ENCODE measurements at regions of chr7 and their contacts with region 1.

Region 1: GRCh38 chr7:122219253-122219865 is 75.3 kb upstream of the AASS start:
- DNase-seq: no peak
- H3K4me3 ChIP-seq: no peak overlapping the region
- H3K27ac ChIP-seq: no peak overlapping the region
- H3K4me1 ChIP-seq: no peaks in the 10 kb centered on the region
- H3K27me3 ChIP-seq: no peaks in the 10 kb centered on the region
- CTCF ChIP-seq: peak in 2 of 3 experiments; percentile 45 to 57; a peak in 2 of 4 replicates
- EP300 ChIP-seq: no peak
- POLR2A ChIP-seq: no peak
- RAD21 ChIP-seq: peak; percentile 78 to 92

Region 2: DNA sequence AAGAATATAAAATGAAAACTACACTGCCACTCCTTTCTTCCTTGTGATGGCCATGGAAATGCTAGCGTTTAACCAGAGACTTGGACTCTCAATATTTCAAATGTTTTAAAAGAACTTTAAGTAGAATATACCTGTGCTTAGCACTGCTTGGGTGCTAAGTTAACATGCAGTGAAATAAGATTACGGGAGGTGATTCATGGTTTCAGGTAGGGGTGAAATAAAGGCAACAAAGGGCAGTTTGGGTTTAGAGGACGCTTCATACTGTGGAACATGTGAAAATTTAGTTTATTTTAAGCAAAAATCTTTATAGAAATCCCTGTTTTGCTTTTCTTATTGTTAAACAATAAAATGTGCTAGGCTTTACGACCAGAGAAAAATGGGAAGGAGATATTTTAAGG is 252.4 kb before region 1 on chr7:
- CTCF ChIA-PET with region 1: no interaction called
- POLR2A ChIA-PET with region 1: no interaction called
- DNase-seq: no peak
- H3K4me3 ChIP-seq: no peak overlapping the region
- H3K27ac ChIP-seq: no peak overlapping the region
- H3K4me1 ChIP-seq: peaks cover 0 to 7% (median 3%) of the 10 kb centered on the region in 4 experiments; a peak in 3 of 7 replicates
- H3K27me3 ChIP-seq: no peaks in the 10 kb centered on the region
- CTCF ChIP-seq: no peak
- EP300 ChIP-seq: no peak
- POLR2A ChIP-seq: no peak
- RAD21 ChIP-seq: no peak

Region 3: DNA sequence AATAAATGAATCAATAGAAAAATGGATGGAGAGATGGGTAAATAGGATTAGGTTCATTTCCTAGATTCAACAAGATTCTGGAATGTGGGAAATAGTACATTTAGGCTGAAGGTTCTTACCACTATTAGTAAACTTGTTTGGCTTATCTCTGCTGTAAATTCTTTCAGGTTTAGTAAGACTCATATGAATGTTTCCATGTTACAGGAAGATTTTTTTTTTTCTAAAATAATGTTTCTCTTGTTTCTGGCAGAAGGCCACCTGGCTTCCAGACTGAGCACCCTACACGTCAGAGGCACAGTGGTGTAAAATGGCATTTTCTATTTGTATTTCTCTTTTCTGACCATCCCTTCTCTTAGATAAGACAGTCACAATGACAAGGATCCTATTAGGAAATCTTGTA is 52.7 kb before region 1 on chr7:
- CTCF ChIA-PET with region 1: no interaction called
- POLR2A ChIA-PET with region 1: no interaction called
- DNase-seq: no peak
- H3K4me3 ChIP-seq: no peak overlapping the region
- H3K27ac ChIP-seq: no peak overlapping the region
- H3K4me1 ChIP-seq: no peaks in the 10 kb centered on the region
- H3K27me3 ChIP-seq: no peaks in the 10 kb centered on the region
- CTCF ChIP-seq: no peak
- EP300 ChIP-seq: no peak
- POLR2A ChIP-seq: no peak
- RAD21 ChIP-seq: no peak

Region 4: GRCh38 chr7:122310119-122311021 is 91.0 kb after region 1 on chr7:
- CTCF ChIA-PET with region 1: interaction called, 11 read pairs
- POLR2A ChIA-PET with region 1: interaction called, 7 read pairs
- DNase-seq: peak in 1 of 2 experiments; percentile 90
- H3K4me3 ChIP-seq: peak overlapping the region; percentile 70 to 89 (median 84)
- H3K27ac ChIP-seq: no peak overlapping the region; the same call in 1 of the 2 replicates
- H3K4me1 ChIP-seq: peaks cover 9 to 26% (median 18%) of the 10 kb centered on the region in 4 experiments; a peak in 6 of 7 replicates
- H3K27me3 ChIP-seq: peaks cover 5 to 63% (median 35%) of the 10 kb centered on the region in 4 experiments
- CTCF ChIP-seq: peak in 2 of 3 experiments; percentile 23 to 25; a peak in 2 of 4 replicates
- EP300 ChIP-seq: no peak
- POLR2A ChIP-seq: peak in 1 of 2 experiments; percentile 49; a peak in 1 of 3 replicates
- RAD21 ChIP-seq: peak; percentile 29 to 49; a peak in 3 of 4 replicates

Region 5: DNA sequence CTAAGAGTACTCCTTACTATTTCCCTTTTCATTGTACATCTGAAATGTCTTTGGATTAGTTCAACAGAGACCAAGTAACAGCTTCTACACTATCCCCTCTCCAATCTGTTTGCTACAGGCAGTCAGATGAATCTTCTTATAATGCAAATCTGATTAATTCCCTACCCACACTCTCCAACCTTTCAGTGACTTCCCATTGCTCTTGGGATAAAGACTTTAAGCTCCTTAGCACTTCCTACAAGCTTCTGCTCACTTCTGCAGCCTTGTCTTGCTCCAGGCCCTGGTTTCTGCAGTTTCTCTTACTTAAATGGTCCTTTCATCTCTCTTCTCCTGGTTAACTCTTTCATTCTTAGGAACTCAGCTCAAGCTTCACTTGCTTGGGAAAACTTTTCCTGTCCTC is 150.4 kb after region 1 on chr7:
- CTCF ChIA-PET with region 1: no interaction called
- POLR2A ChIA-PET with region 1: no interaction called
- DNase-seq: no peak
- H3K4me3 ChIP-seq: no peak overlapping the region
- H3K27ac ChIP-seq: no peak overlapping the region
- H3K4me1 ChIP-seq: peaks cover 0 to 2% (median 0%) of the 10 kb centered on the region in 4 experiments; a peak in 1 of 7 replicates
- H3K27me3 ChIP-seq: no peaks in the 10 kb centered on the region; a peak in 1 of 7 replicates
- CTCF ChIP-seq: no peak
- EP300 ChIP-seq: no peak
- POLR2A ChIP-seq: no peak
- RAD21 ChIP-seq: no peak

Measured in H1 (cell line).